ENCODE measurements at regions of chr4 and their contacts with region 1.

Region 1: DNA sequence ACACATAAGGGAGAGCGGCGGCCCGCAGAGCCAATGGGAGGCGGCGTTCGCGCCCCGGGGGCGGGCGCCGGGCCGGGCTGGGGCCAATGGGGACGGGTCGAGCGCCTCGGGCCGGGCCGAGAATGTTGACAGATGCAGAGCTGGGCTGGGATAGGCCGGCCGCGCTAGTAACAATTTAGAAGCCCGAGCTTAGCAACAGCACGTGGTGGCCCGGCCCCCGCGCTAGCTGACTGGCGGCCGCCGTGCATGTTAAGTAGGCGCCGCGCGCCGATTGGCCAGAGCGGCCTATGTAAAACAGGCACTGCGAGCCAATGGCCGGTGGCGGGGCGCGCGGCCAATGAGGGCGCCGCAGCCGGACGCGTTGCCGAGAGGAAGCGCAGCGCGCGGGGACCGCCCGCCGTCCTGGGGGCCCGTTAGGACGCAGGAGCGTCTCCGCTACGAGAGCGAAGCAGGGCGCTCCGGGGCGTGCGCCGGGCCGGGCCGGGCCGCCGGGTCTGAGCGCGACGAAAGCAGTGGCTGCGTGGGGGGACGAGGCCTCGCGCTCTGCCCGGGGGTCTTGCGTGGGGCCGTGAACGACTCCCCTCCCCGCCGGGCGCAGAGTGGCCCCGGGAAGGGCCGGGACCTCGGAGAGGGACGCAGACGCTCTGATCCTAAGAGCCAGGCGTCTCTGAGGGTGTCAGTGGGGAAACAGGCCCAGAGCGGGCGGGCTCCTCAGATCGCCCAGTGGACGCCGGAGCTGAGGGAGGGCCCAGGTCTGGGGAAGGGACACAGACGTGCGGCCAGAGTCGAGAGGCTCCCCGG is 434 bp upstream of the MXD4 start:
- DNase-seq: peak; percentile 95 to 99
- H3K4me3 ChIP-seq: peak overlapping the region; percentile 62
- H3K27ac ChIP-seq: no peak overlapping the region
- H3K4me1 ChIP-seq: peaks cover 9% of the 10 kb centered on the region; the same call in 1 of the 2 replicates
- H3K27me3 ChIP-seq: 0 out of 2 replicates have a peak, but pooled peaks cover 6% of the 10 kb centered on the region
- CTCF ChIP-seq: no peak

Region 2: DNA sequence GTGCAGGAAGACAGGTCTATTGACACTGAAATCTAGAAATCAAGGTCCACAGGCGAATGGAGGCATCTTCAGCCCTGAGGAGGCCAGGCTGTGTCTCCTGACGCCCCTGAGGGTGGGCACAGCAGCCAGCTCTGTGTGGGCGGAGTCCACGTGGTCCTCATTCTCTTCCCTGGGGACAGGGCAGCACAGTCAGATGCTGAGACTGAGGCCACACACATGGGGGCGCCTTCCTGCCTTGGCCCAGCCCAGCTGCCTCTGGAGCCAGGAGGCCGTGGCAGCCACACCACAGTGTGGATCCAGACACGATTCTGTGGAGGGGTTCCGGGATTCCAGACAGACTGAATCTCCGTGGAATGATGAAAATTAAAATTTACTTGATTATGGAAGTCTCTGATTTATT is 448.4 kb before region 1 on chr4:
- CTCF ChIA-PET with region 1: no interaction called
- POLR2A ChIA-PET with region 1: no interaction called
- intact Hi-C with region 1: no loop called
- DNase-seq: no peak
- H3K4me3 ChIP-seq: no peak overlapping the region
- H3K27ac ChIP-seq: no peak overlapping the region
- H3K4me1 ChIP-seq: no peaks in the 10 kb centered on the region
- H3K27me3 ChIP-seq: no peaks in the 10 kb centered on the region
- CTCF ChIP-seq: no peak

Region 3: GRCh38 chr4:2330091-2331042 is 68.0 kb after region 1 on chr4:
- CTCF ChIA-PET with region 1: no interaction called
- POLR2A ChIA-PET with region 1: no interaction called
- intact Hi-C with region 1: loop called (anchors 1 kb)
- DNase-seq: peak; percentile 28 to 82
- H3K4me3 ChIP-seq: no peak overlapping the region
- H3K27ac ChIP-seq: no peak overlapping the region
- H3K4me1 ChIP-seq: peaks cover 11% of the 10 kb centered on the region
- H3K27me3 ChIP-seq: no peaks in the 10 kb centered on the region
- CTCF ChIP-seq: no peak

Region 4: GRCh38 chr4:2412885-2413716 is 150.8 kb after region 1 on chr4:
- CTCF ChIA-PET with region 1: no interaction called
- POLR2A ChIA-PET with region 1: no interaction called
- intact Hi-C with region 1: loop called (anchors 1 kb)
- DNase-seq: peak; percentile 83 to 88
- H3K4me3 ChIP-seq: peak overlapping the region; percentile 50
- H3K27ac ChIP-seq: peak overlapping the region; percentile 76
- H3K4me1 ChIP-seq: peaks cover 29% of the 10 kb centered on the region
- H3K27me3 ChIP-seq: peaks cover 7% of the 10 kb centered on the region
- CTCF ChIP-seq: peak; percentile 44

Region 5: DNA sequence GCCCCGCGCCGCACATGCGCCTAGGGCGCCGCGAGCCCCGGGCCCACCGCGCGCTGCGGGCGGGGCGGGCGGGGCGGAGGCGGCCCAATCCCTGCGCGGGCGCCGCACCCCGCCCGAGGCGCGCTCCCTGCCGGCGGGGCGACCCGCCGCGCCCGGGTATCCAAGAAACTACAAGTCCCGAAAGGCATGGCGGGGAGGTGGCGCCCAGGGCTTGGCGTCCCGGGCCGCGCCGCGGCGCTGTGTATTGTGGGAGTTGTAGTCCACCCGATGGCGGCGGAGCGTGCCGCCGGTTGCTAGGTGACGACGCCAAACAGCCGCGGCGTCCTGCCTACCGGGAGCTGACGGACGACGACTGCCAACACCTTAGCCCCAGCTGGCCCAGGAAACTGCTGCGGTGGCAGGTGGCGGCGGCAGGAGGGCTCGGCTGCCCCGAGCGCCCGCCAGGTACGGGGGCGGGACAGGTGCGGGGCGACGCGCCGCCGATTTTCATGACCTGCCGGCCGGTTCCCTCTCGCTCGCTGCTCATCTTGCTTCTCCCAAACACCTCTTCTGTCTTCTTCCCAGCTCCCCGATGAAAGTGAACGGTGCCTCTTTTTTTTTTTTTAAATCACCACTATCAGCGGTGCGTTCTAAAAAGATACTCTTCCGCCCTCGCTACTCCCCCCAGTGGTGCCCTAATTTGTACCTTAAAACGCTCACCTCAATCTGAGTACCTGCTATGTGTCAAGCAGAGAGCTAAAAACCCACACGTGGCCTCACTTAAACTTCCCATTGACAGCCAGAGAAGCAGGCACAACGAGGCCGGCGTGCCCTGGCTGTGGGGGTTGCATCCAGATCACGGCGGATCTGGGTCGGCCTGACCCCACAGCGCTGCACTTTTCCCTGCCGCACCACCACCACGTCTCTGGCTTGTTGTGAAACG is 156.6 kb after region 1 on chr4 and contains the start of gene CFAP99:
- CTCF ChIA-PET with region 1: no interaction called
- POLR2A ChIA-PET with region 1: no interaction called
- intact Hi-C with region 1: loop called (anchors 1 kb)
- DNase-seq: peak; percentile 86 to 96
- H3K4me3 ChIP-seq: peak within 1 kb of the TSS; percentile 54; the same call in 1 of the 2 replicates
- H3K27ac ChIP-seq: no peak within 1 kb of the TSS
- H3K4me1 ChIP-seq: peaks cover 6% of the 10 kb centered on the region; the same call in 1 of the 2 replicates
- H3K27me3 ChIP-seq: peaks cover 46% of the 10 kb centered on the region
- CTCF ChIP-seq: no peak
- total RNA-seq, gene CFAP99: 0.48 and 0.85 TPM in 2 replicates